ENCODE measurements at regions of chr1 and their contacts with region 1.

Region 1: GRCh38 chr1:148263128-148263905 is 111.2 kb upstream of the NBPF11 start:
- DNase-seq: peak; percentile 99
- ATAC-seq: peak; percentile 72
- H3K4me3 ChIP-seq: peak overlapping the region; percentile 41 to 59
- H3K27ac ChIP-seq: peak overlapping the region; percentile 78
- H3K4me1 ChIP-seq: peaks cover 4 to 33% of the 10 kb centered on the region in 2 experiments; a peak in 3 of 4 replicates
- H3K27me3 ChIP-seq: no peaks in the 10 kb centered on the region
- CTCF ChIP-seq: no peak
- POLR2A ChIP-seq: peak; percentile 100
- RAD21 ChIP-seq: peak; percentile 34; the same call in 1 of the 2 replicates

Region 2: GRCh38 chr1:148166568-148167492 is 96.5 kb before region 1 on chr1:
- CTCF ChIA-PET with region 1: no interaction called
- POLR2A ChIA-PET with region 1: no interaction called
- RAD21 ChIA-PET with region 1: no interaction called
- intact Hi-C with region 1: no loop called
- DNase-seq: no peak
- ATAC-seq: no peak
- H3K4me3 ChIP-seq: no peak overlapping the region
- H3K27ac ChIP-seq: no peak overlapping the region
- H3K4me1 ChIP-seq: no peaks in the 10 kb centered on the region
- H3K27me3 ChIP-seq: no peaks in the 10 kb centered on the region
- CTCF ChIP-seq: no peak
- POLR2A ChIP-seq: no peak
- RAD21 ChIP-seq: no peak

Region 3: GRCh38 chr1:148290881-148291280 is 27.6 kb after region 1 on chr1:
- CTCF ChIA-PET with region 1: no interaction called
- POLR2A ChIA-PET with region 1: no interaction called
- RAD21 ChIA-PET with region 1: no interaction called
- intact Hi-C with region 1: no loop called
- DNase-seq: no peak
- ATAC-seq: no peak
- H3K4me3 ChIP-seq: no peak overlapping the region
- H3K27ac ChIP-seq: no peak overlapping the region
- H3K4me1 ChIP-seq: no peaks in the 10 kb centered on the region
- H3K27me3 ChIP-seq: no peaks in the 10 kb centered on the region
- CTCF ChIP-seq: no peak
- POLR2A ChIP-seq: no peak
- RAD21 ChIP-seq: no peak

Region 4: DNA sequence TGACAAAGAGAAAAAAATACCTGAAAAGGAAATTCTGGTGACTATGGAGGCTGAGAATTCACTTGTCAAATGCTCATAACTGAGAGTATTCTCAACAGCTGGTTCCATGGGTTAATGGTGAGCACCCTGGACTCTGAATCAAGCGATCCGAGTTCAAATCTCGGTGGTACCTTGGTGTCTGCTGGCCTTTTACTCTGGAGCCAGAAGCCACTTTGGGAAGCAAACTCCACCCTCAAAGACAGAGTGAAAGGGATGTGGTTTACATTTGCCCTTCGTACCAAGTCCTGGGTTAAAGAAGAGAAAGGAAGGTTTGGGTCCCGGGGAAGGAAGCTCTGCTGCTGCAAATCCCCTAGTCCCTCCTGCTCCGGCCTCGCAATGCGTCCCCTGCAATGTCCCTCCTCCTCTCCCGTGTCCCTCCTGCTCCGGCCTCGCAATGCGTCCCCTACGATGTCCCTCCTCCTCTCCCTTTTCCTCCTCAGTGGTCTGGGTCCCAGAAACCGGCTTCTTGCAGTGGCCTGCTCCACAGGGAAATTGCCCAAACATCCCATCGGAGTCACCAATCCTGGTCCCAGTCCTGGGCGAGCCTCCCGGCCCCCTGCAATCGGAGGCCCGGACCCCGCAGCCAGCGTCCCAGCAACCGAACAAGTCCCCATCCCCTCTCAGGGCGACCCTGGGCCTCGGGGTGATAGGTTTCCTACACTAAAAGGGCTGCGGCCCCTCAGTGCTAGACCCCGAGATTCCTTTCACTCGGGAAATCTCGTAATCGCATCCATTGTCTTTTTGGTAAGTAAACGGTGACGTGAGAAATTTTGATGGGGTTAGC is 90.4 kb after region 1 on chr1:
- CTCF ChIA-PET with region 1: no interaction called
- POLR2A ChIA-PET with region 1: interaction called, 14 read pairs
- RAD21 ChIA-PET with region 1: no interaction called
- intact Hi-C with region 1: no loop called
- DNase-seq: peak; percentile 81
- ATAC-seq: peak; percentile 97
- H3K4me3 ChIP-seq: no peak overlapping the region
- H3K27ac ChIP-seq: no peak overlapping the region
- H3K4me1 ChIP-seq: peaks cover 0 to 11% of the 10 kb centered on the region in 2 experiments; a peak in 1 of 4 replicates
- H3K27me3 ChIP-seq: no peaks in the 10 kb centered on the region
- CTCF ChIP-seq: no peak
- POLR2A ChIP-seq: no peak
- RAD21 ChIP-seq: no peak

Region 5: GRCh38 chr1:148388260-148389027 is 125.1 kb after region 1 on chr1:
- CTCF ChIA-PET with region 1: no interaction called
- POLR2A ChIA-PET with region 1: interaction called, 22 read pairs
- RAD21 ChIA-PET with region 1: no interaction called
- intact Hi-C with region 1: no loop called
- DNase-seq: peak; percentile 79
- ATAC-seq: peak; percentile 89
- H3K4me3 ChIP-seq: peak overlapping the region; percentile 29 to 54
- H3K27ac ChIP-seq: peak overlapping the region; percentile 73
- H3K4me1 ChIP-seq: peaks cover 0 to 18% of the 10 kb centered on the region in 2 experiments; a peak in 2 of 4 replicates
- H3K27me3 ChIP-seq: no peaks in the 10 kb centered on the region
- CTCF ChIP-seq: no peak
- POLR2A ChIP-seq: peak; percentile 99
- RAD21 ChIP-seq: no peak

Measured in HCT116 (cell line).